PC-9 (cell line): ENCODE measurements at regions of chr2 and their contacts with region 1.

Region 1: GRCh38 chr2:164737612-164738081 is 104.0 kb downstream of the COBLL1 start:
- DNase-seq: peak in 1 of 2 experiments; percentile 24
- H3K4me3 ChIP-seq: no peak overlapping the region
- H3K27ac ChIP-seq: no peak overlapping the region
- H3K4me1 ChIP-seq: peaks cover 7% of the 10 kb centered on the region; the same call in 1 of the 2 replicates
- H3K27me3 ChIP-seq: no peaks in the 10 kb centered on the region
- CTCF ChIP-seq: peak; percentile 82

Region 2: DNA sequence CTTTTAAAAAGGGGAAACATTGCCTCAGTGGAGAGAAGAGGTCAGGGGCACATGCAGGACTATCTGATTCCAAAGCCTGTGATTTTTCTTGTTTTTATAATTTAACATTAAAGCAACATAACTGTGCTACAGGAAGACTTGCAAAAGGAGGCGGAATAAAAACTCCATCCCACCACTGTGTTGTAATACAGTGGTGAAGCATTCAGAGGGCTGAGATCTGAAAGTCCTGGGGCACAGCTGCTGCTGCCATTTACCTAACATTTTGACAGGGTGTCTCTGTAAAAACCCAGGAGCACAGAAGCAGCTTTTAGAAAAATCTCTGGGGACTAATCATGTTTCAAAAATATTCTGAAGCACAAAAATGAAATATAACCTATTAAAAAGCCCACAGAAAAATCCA is 213.9 kb before region 1 on chr2:
- CTCF ChIA-PET with region 1: no interaction called
- POLR2A ChIA-PET with region 1: no interaction called
- intact Hi-C with region 1: no loop called
- DNase-seq: no peak
- H3K4me3 ChIP-seq: no peak overlapping the region
- H3K27ac ChIP-seq: no peak overlapping the region
- H3K4me1 ChIP-seq: no peaks in the 10 kb centered on the region
- H3K27me3 ChIP-seq: no peaks in the 10 kb centered on the region
- CTCF ChIP-seq: no peak

Region 3: GRCh38 chr2:164841719-164842623 is 104.3 kb after region 1 on chr2 and contains the start of gene COBLL1:
- CTCF ChIA-PET with region 1: no interaction called
- POLR2A ChIA-PET with region 1: no interaction called
- intact Hi-C with region 1: loop called (anchors 1 kb)
- DNase-seq: peak; percentile 64 to 75
- H3K4me3 ChIP-seq: peak within 1 kb of the TSS; percentile 85
- H3K27ac ChIP-seq: peak within 1 kb of the TSS; percentile 69
- H3K4me1 ChIP-seq: peaks cover 19% of the 10 kb centered on the region
- H3K27me3 ChIP-seq: no peaks in the 10 kb centered on the region
- CTCF ChIP-seq: peak; percentile 76
- total RNA-seq, gene COBLL1: 6.6 and 8.0 TPM in 2 replicates

Region 4: GRCh38 chr2:164917296-164917903 is 179.8 kb after region 1 on chr2:
- CTCF ChIA-PET with region 1: no interaction called
- POLR2A ChIA-PET with region 1: no interaction called
- intact Hi-C with region 1: loop called (anchors 1 kb)
- DNase-seq: peak in 1 of 2 experiments; percentile 26
- H3K4me3 ChIP-seq: no peak overlapping the region
- H3K27ac ChIP-seq: no peak overlapping the region
- H3K4me1 ChIP-seq: peaks cover 30% of the 10 kb centered on the region
- H3K27me3 ChIP-seq: no peaks in the 10 kb centered on the region
- CTCF ChIP-seq: peak; percentile 63

Region 5: DNA sequence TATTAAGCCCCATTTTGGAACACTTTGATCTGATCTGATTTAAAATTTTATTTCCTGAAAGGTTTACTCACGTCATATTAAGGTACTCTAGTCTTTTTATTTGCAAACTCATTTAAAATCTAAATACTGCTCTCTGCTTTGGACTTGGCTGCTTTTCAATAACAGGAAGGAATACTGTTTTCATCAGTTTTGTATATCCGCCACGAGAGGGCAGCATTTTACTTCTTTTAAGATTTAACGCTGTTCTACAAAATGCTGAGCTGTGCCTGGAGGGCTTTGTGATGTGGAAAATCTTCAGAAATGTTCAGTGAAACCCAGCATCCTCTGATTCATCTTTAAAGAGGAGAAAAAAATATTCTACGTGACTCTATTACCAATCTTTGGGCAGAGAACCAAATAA is 255.2 kb after region 1 on chr2:
- CTCF ChIA-PET with region 1: no interaction called
- POLR2A ChIA-PET with region 1: no interaction called
- intact Hi-C with region 1: loop called (anchors 5 kb)
- DNase-seq: peak; percentile 14 to 64
- H3K4me3 ChIP-seq: no peak overlapping the region
- H3K27ac ChIP-seq: no peak overlapping the region
- H3K4me1 ChIP-seq: no peaks in the 10 kb centered on the region
- H3K27me3 ChIP-seq: no peaks in the 10 kb centered on the region
- CTCF ChIP-seq: peak; percentile 65

Region 6: GRCh38 chr2:165067958-165068757 is 330.5 kb after region 1 on chr2:
- CTCF ChIA-PET with region 1: no interaction called
- POLR2A ChIA-PET with region 1: no interaction called
- intact Hi-C with region 1: no loop called
- DNase-seq: no peak
- H3K4me3 ChIP-seq: no peak overlapping the region
- H3K27ac ChIP-seq: no peak overlapping the region
- H3K4me1 ChIP-seq: no peaks in the 10 kb centered on the region
- H3K27me3 ChIP-seq: no peaks in the 10 kb centered on the region
- CTCF ChIP-seq: no peak

Region 7: DNA sequence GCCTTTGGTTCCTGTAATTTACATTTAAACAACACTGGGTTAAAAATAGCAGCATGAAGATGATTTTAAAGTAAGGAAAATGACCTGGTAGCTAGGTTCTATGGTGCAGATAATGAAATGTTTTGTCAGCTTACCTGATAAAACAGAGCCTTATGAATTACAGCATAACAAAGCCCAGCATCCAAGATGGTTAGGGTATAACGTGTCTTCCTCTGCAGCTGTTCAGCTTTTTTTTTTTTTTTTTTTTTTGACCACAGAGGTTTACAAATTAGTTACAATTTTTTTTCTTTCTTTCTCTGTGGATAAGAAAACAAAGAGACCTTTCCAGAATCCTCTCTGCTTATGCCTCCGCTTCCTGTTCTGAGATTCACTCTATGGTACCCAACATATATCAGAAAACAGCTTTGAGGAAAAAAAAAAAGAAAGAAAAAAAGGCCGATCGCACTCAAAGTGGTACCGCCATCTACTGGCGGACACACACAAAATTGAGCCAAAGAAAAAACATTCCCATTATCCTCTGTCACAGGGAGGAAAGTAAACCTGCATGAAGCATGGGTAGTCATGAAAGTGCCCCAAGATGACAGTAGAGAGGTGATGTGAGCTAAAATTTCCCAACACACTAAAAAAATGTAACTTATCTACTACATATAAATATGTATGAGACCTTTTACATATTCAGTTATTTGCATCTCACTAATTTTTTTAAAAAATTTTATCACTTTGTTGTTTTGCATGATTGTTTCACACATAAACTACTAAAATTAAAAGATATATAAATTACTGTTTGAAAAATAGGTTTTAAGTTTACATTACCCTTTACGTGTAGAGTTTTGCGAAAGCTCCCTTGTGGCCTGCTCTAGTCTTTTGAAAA is 466.3 kb after region 1 on chr2 and contains the start of gene SCN3A:
- CTCF ChIA-PET with region 1: interaction called, 8 read pairs
- POLR2A ChIA-PET with region 1: no interaction called
- intact Hi-C with region 1: loop called (anchors 5 kb)
- DNase-seq: peak in 1 of 2 experiments; percentile 10
- H3K4me3 ChIP-seq: no peak within 1 kb of the TSS
- H3K27ac ChIP-seq: no peak within 1 kb of the TSS
- H3K4me1 ChIP-seq: no peaks in the 10 kb centered on the region
- H3K27me3 ChIP-seq: no peaks in the 10 kb centered on the region
- CTCF ChIP-seq: peak; percentile 66
- total RNA-seq, gene SCN3A: not detected in 2 replicates